Dorsolateral prefrontal cortex (tissue), 120 donors: ENCODE measurements at regions of chr17 and their contacts with region 1.

Region 1: DNA sequence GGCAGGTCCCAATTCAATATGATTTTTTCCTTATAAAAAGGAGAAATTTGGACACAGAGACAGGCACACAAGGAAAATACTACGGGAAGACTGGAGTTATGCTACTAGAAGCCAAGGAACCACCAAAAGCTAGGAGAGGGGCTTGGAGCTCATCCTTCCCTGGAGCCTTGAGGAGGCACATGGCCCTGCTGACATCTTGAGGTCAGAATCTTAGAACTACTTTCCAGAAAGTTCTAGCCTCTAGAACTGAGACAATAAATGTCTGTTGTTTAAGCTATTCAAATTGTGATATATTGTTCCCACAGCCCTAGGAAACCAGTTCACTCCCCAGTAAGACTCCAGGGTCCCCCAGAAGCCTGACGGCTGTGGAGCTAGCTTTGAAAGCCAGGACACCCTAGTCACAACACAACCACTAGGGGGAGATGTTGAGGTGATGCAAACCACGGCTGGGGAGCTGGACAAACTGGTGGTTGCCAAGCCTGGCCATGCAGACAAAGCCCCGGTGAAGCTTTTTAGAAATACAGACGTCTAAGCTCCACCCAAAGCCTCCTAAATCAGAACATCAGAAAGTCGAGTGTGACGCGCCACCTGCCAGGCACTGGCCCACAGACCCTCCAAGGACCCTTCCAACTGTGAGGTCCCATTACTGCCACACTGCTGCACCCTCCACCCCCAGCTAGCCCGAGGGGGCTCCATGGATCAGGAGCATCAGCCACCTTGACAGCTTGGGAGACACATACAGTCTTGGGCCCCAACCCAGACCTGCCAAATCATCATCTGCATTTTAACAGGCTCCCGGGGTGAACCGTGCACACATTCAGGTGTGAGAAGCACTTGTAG is 106.4 kb downstream of the SLC39A11 start:
- DNase-seq: peak; percentile 45 to 85 (median 74)
- H3K4me3 ChIP-seq: no peak overlapping the region
- H3K27ac ChIP-seq: peak overlapping the region in 25 of 59 donors; percentile 0 to 88 (median 53)
- H3K27me3 ChIP-seq: no peaks in the 10 kb centered on the region
- CTCF ChIP-seq: peak; percentile 65 to 95 (median 86)

Region 2: GRCh38 chr17:72884066-72884465 is 102.0 kb before region 1 on chr17:
- intact Hi-C with region 1: loop called in 1 of 2 experiments (anchors 2 kb)
- DNase-seq: peak; percentile 21 to 92 (median 80)
- H3K4me3 ChIP-seq: peak overlapping the region in 1 of 59 donors; percentile 17
- H3K27ac ChIP-seq: peak overlapping the region in 58 of 59 donors; percentile 1 to 95 (median 86)
- H3K27me3 ChIP-seq: no peaks in the 10 kb centered on the region
- CTCF ChIP-seq: peak in 20 of 56 donors; percentile 5 to 57 (median 17)

Region 3: GRCh38 chr17:73043686-73044581 is 57.8 kb after region 1 on chr17:
- intact Hi-C with region 1: loop called in 1 of 2 experiments (anchors 5 kb)
- DNase-seq: no peak
- H3K4me3 ChIP-seq: peak overlapping the region in 7 of 59 donors; percentile 1 to 40 (median 16)
- H3K27ac ChIP-seq: peak overlapping the region in 44 of 59 donors; percentile 0 to 79 (median 50)
- H3K27me3 ChIP-seq: no peaks in the 10 kb centered on the region
- CTCF ChIP-seq: no peak

Region 4: DNA sequence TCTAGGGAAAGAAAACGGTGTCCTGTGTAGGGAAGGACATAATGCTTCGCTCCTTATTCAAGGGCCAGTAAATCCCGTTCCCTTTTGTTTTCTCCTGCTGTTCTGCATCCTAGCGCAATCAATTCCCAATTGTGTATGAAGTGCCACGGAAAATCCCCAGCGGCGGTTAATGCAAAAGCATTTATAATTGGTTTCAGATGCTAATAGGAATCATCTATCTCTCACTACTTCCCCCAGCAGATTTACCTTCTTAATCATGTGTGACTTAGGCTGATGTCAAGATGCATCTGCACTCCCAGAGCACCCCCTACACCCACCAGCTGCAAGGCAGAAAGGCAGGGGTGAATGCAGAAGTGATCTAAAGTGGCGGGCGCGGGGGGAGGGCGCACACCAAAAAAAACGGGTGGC is 146.0 kb after region 1 on chr17:
- intact Hi-C with region 1: no loop called
- DNase-seq: no peak
- H3K4me3 ChIP-seq: no peak overlapping the region
- H3K27ac ChIP-seq: no peak overlapping the region
- H3K27me3 ChIP-seq: no peaks in the 10 kb centered on the region
- CTCF ChIP-seq: no peak

Region 5: GRCh38 chr17:73156166-73156840 is 170.2 kb after region 1 on chr17:
- intact Hi-C with region 1: loop called (anchors 1 to 10 kb)
- DNase-seq: peak; percentile 71 to 82 (median 76)
- H3K4me3 ChIP-seq: peak overlapping the region in 9 of 59 donors; percentile 6 to 41 (median 26)
- H3K27ac ChIP-seq: peak overlapping the region in 47 of 59 donors; percentile 1 to 83 (median 55)
- H3K27me3 ChIP-seq: no peaks in the 10 kb centered on the region
- CTCF ChIP-seq: peak; percentile 38 to 90 (median 81)

Region 6: DNA sequence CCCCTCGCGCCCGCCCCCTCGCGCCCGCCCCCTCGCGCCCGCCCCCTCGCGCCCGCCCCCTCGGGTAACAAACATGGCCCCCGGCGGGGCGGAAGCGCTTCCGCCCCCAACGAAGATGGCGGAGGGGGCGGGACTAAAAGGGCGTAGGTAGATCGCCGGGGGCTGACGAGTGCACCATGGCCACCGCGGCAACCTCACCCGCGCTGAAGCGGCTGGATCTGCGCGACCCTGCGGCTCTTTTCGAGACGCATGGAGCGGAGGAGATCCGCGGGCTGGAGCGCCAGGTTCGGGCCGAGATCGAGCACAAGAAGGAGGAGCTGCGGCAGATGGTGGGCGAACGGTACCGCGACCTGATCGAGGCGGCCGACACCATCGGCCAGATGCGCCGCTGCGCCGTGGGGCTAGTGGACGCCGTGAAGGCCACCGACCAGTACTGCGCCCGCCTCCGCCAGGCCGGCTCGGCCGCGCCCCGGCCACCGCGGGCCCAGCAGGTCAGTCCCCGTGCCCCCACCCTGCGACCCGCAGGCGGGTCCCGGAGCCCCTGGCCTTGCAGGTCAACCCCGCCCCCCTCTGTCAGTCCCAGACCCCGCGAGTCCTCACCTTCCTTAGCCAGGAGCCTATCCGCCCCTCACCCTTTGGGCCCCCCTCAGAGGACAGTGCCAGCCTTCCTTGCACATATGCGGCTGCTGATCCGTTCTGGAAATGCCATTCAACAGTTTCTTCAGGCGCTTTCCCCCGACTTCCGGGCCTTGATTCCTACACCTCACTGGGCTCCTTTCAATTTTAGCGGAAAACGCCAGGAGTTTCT is 207.0 kb after region 1 on chr17 and contains the start of gene COG1:
- intact Hi-C with region 1: loop called in 1 of 2 experiments (anchors 2 kb)
- DNase-seq: peak; percentile 51 to 85 (median 74)
- H3K4me3 ChIP-seq: peak within 1 kb of the TSS; percentile 73 to 100 (median 95)
- H3K27ac ChIP-seq: peak within 1 kb of the TSS; percentile 47 to 94 (median 86)
- H3K27me3 ChIP-seq: no peaks in the 10 kb centered on the region
- CTCF ChIP-seq: peak in 6 of 56 donors; percentile 3 to 39 (median 11)
- total RNA-seq, gene COG1: 48.4 to 137 (median 85.4) TPM